Posterior vena cava (tissue), 2 donors: ENCODE measurements at regions of chr10 and their contacts with region 1.

Region 1: DNA sequence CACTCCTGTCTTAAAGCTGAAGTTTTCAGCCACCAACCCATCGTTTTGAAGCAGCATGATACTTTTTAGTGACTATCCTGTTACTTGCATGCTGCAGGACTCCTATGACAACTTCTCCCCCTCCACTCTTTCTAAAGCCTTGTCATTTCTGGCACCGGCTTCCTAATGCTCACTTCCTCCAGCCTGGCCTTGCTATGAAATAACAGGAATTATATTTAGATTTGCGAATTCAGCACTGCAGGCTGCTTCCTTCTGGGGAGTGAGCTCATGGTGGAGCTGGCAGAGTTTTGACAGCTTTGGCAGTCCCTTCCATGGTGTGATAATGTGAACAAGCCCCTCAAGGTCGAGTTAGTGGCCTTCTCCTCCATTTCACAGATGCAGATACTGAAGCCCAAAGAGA is 13.4 kb downstream of the BLNK start:
- DNase-seq: no peak

Region 2: DNA sequence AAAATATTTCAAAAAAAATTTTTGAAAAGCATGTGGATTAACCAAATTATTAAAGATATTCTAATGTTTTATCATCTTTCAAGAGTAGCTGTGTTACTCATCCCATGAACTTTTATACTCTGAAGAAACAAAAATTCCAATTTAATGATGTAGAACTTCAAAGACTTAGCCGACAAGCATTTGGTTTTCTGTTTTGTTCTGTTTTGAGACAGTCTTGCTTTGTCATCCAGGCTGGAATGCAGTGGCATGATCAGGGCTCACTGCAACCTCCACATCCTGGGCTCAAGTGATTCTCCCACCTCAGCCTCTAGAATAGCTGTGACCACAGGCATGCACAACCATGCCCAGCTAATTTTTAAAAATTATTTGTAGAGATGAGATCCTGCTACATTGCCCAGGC is 556.3 kb after region 1 on chr10:
- intact Hi-C with region 1: loop called in 1 of 2 experiments (anchors 10 kb)
- DNase-seq: no peak